ENCODE measurements at regions of chr6 and their contacts with region 1.

Region 1: GRCh38 chr6:149925974-149926777 is 3.3 kb upstream of the RAET1G start:
- DNase-seq: no peak
- ATAC-seq: peak; percentile 58
- H3K4me3 Mint-ChIP-seq: no peak overlapping the region
- H3K27ac Mint-ChIP-seq: no peak overlapping the region
- H3K4me1 Mint-ChIP-seq: peaks cover 31% of the 10 kb centered on the region
- H3K27me3 Mint-ChIP-seq: peaks cover 87% of the 10 kb centered on the region
- CTCF ChIP-seq: no peak

Region 2: DNA sequence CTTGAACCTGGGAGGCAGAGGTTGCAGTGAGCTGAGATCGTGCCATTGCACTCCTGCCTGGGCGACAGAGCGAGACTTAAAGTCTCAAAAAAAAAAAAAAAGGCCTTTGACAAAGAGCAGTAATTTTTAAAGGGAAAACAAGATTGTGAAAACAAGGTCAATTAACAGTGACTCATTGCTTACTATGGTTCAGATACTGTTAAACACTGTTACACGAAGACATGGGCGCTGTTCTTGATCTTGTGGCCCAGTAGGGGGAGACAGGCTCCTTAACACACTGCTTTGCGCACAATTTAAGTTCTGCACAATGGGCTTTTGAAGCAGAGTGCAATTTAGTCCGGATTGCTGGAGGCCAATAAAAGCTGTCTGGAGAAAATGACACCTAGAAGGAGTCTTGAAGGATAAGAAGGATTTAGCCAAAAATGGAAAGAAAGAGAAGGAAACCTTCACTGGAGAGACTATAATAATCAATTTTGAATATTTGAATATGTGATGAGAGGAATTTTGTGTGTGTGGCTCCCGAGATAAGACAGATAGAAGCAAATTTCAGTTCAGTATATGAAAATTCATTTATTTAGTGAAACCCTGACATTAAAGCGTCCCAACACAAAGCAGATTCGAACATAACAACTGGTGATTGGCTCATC is 202.3 kb before region 1 on chr6:
- CTCF ChIA-PET with region 1: no interaction called
- POLR2A ChIA-PET with region 1: no interaction called
- intact Hi-C with region 1: loop called (anchors 10 kb)
- DNase-seq: no peak
- ATAC-seq: peak; percentile 91
- H3K4me3 Mint-ChIP-seq: no peak overlapping the region
- H3K27ac Mint-ChIP-seq: peak overlapping the region; percentile 65
- H3K4me1 Mint-ChIP-seq: peaks cover 15% of the 10 kb centered on the region
- H3K27me3 Mint-ChIP-seq: no peaks in the 10 kb centered on the region
- CTCF ChIP-seq: peak; percentile 48

Region 3: DNA sequence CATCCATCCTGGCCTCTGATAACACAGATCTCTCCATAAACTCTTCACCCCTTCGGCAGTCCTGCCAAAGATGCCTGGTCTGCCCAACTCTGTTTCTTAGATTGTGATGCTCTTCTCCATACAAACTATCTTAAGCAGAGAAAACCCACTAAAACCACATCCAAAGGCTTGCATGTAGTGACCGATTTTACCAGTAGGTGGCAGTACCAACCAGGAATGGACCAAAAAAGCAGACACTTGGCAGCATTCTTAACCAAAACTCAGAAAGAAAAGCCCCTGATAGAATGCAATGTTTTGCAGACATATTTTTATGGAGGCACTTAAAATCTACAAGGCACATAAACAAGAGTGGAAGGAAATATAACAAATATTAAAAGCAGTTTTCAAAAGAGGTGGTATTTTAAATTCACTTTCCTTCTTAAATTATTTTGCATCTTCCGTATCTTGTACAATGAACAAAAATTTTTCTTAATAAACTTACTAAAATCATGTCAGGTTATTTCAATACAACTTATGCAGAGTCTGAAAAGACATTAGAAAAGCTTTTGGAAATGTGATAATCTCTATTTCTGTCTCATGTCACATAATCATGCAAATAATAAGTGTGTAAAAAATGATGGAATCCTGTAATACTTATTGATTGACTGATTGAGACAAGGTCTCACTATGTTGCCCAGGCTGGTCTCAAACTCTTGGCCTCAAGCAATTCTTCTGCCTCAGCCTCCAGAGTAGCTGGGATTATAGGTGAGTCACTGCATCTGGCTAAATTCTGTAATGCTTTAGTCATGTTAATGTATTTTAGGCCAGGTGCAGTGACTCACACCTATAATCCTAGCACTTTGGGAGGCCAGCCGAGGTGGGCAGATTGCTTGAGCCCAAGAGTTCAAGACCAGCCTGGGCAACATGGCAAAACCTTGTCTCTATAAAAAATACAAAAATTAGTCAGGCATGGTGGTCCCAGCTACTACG is 91.4 kb before region 1 on chr6:
- CTCF ChIA-PET with region 1: interaction called, 3 read pairs
- POLR2A ChIA-PET with region 1: no interaction called
- intact Hi-C with region 1: loop called (anchors 1 kb)
- DNase-seq: peak; percentile 25
- ATAC-seq: peak; percentile 56
- H3K4me3 Mint-ChIP-seq: no peak overlapping the region
- H3K27ac Mint-ChIP-seq: no peak overlapping the region
- H3K4me1 Mint-ChIP-seq: no peaks in the 10 kb centered on the region
- H3K27me3 Mint-ChIP-seq: peaks cover 13% of the 10 kb centered on the region
- CTCF ChIP-seq: peak; percentile 88

Region 4: GRCh38 chr6:149940672-149940982 is 14.5 kb after region 1 on chr6:
- CTCF ChIA-PET with region 1: no interaction called
- POLR2A ChIA-PET with region 1: no interaction called
- intact Hi-C with region 1: no loop called
- DNase-seq: no peak
- ATAC-seq: no peak
- H3K4me3 Mint-ChIP-seq: peak overlapping the region; percentile 53
- H3K27ac Mint-ChIP-seq: peak overlapping the region; percentile 50
- H3K4me1 Mint-ChIP-seq: peaks cover 43% of the 10 kb centered on the region
- H3K27me3 Mint-ChIP-seq: peaks cover 51% of the 10 kb centered on the region
- CTCF ChIP-seq: no peak

Region 5: GRCh38 chr6:150310539-150310938 is 384.4 kb after region 1 on chr6:
- CTCF ChIA-PET with region 1: no interaction called
- POLR2A ChIA-PET with region 1: no interaction called
- intact Hi-C with region 1: no loop called
- DNase-seq: no peak
- ATAC-seq: no peak
- H3K4me3 Mint-ChIP-seq: no peak overlapping the region
- H3K27ac Mint-ChIP-seq: no peak overlapping the region
- H3K4me1 Mint-ChIP-seq: no peaks in the 10 kb centered on the region
- H3K27me3 Mint-ChIP-seq: peaks cover 18% of the 10 kb centered on the region
- CTCF ChIP-seq: no peak

Measured in activated B cell treated with CpG ODN at 0.5 μM for 24 hours (primary cell).